Breast epithelium (tissue), 4 donors: ENCODE measurements at regions of chr17 and their contacts with region 1.

Region 1: DNA sequence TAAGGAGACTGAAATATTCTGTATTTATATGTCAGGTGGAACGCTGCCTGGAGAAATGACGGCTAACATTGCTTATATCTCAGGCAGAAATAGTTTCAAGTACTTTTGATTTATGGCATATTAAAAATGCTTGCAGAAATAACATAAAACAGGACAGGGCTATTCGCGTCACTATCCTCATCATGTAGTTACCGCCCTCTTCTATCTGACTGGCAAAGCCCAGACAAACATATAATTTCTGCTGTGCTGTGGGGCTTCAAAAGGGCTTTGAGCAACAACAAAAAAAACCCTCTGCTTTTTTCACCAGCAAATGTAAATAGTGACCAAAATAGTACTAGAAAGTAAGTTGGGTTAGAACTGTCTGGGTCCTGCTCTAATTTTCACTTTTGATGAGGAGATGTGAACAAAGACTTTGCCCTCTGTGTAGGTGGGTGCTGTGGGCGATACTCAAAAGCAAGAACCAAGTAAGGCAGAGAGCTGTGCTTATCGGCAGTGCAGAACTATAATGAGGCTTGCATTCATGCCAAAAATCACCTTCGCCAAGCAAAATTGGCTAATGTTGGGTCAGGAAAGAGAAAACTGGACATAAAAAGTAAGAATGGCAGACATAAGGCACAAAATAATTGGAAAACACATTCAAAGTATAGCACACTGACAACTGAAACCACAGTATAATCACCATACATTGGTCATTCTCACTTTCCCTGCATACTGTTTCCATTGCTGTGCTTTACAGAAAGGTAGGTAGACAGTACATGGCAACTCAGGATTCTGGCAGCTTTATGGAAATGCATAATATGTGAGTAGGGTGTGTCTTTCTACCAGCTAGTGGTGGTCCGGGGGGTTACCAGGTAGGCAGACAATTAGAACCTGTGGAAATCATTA is 151.2 kb upstream of the AXIN2 start:
- DNase-seq: no peak
- H3K4me3 ChIP-seq: no peak overlapping the region
- H3K27ac ChIP-seq: no peak overlapping the region
- H3K4me1 ChIP-seq: no peaks in the 10 kb centered on the region
- H3K27me3 ChIP-seq: no peaks in the 10 kb centered on the region
- CTCF ChIP-seq: no peak
- POLR2A ChIP-seq: no peak

Region 2: GRCh38 chr17:65698381-65699061 is 14.1 kb before region 1 on chr17:
- intact Hi-C with region 1: loop called (anchors 1 kb)
- DNase-seq: no peak
- H3K4me3 ChIP-seq: no peak overlapping the region
- H3K27ac ChIP-seq: no peak overlapping the region
- H3K4me1 ChIP-seq: no peaks in the 10 kb centered on the region
- H3K27me3 ChIP-seq: no peaks in the 10 kb centered on the region
- CTCF ChIP-seq: no peak
- POLR2A ChIP-seq: no peak

Region 3: DNA sequence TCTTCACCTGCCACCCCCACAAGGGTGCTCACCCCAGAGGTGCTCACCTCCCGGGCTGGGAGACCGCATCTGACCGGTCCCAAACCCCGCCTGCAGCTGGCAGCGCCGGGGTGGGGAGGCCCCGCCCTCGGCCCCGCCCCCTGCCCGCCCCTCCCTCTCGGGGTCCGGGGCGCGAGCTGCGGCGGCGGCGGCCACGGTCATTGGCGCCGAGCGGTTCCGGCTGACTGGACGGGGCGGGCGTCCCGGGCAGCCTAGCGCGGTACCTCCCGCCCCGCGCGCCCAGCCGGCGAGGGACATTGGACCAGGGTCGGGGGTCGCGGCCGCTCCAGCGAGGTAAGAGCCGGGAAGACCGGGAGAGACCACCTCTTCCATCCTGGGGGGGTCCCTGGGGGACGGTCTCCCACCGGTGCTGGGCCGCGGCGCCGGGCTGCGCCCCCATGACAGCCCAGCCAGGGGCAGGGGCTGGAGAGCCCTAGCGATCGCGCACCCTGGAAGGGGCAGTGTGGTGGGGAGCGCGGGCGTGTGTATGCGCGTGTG is 1122.4 kb after region 1 on chr17 and contains the start of gene CACNG5:
- intact Hi-C with region 1: loop called (anchors 5 kb)
- DNase-seq: no peak
- H3K4me3 ChIP-seq: peak within 1 kb of the TSS in 1 of 3 donors; percentile 28
- H3K27ac ChIP-seq: no peak within 1 kb of the TSS
- H3K4me1 ChIP-seq: no peaks in the 10 kb centered on the region
- H3K27me3 ChIP-seq: peaks cover 0 to 60% of the 10 kb centered on the region in 2 donors
- CTCF ChIP-seq: no peak
- POLR2A ChIP-seq: no peak
- total RNA-seq, gene CACNG5: not detected